Lower leg skin (tissue), 4 donors: ENCODE measurements at regions of chr6 and their contacts with region 1.

Region 1: DNA sequence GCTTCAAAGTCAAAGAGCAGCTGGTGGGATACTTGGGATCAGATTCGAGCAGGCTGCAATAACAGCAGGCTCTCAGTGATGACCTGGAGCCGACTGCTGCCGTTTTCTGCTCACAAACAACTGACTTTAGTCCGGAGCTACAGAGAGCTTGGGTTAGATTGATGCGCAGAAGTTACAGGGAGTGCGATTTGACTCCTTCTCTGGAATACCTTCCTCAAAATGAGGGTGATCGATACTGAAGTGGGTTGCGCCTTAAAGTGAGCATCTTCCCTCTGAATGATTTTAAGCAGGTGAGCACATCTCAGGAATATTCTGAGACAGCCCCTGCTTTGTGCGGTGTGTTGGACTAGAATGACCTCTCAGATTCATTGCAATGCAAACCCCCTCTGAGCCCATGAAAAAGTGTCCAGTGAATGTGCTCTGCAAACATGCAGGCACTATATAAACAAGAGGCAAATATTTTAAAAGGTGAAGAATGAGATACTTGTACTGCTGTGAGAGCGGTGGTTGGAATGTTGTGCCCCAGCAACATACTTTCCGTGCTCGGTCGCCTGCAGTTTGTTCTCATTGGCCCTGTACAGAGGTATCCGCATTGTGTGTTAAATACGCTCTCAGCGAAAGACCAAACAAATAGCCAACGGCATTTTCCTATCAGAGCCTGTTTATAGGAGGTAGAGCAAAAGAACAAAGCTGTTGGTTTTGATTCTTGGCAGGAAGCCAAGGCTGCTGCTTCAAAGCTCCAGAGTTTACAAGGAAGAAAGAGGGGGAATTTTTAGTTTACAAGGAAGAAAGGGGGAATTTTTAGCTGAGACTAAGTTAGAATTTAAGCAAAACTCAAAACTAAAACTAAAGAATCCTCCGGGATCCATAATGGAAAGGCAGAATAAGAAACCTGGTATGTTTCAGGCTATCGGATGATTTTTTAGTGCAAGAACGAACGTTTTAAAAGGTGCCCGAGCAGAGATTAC is 67.7 kb downstream of the PHACTR2 start:
- DNase-seq: no peak
- H3K4me3 ChIP-seq: no peak overlapping the region
- CTCF ChIP-seq: no peak
- POLR2A ChIP-seq: no peak

Region 2: GRCh38 chr6:142413111-142413510 is 1332.3 kb before region 1 on chr6:
- intact Hi-C with region 1: loop called (anchors 5 kb)
- DNase-seq: no peak
- H3K4me3 ChIP-seq: no peak overlapping the region
- CTCF ChIP-seq: no peak
- POLR2A ChIP-seq: no peak

Region 3: GRCh38 chr6:143607974-143608373 is 137.5 kb before region 1 on chr6:
- intact Hi-C with region 1: no loop called
- DNase-seq: no peak
- H3K4me3 ChIP-seq: no peak overlapping the region
- CTCF ChIP-seq: no peak
- POLR2A ChIP-seq: no peak

Region 4: DNA sequence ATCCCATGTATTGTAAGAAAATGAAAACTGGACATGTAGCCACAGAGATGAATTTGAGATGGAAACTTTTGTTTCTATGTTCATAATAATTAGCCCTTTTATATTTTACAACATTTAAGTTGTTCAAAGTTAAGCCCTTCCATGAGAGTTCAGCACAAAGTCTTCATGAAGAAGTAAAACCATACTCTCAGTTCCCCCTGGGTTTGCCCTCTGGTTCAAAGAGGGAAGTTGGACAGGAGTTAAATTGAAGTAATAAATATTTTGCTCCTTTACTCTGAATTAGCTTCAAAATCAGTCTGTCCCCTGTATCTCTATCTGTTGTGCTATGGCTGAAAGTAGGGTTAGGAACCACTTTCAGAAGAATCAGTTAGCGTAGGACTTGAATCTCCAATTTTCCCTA is 36.6 kb before region 1 on chr6:
- intact Hi-C with region 1: no loop called
- DNase-seq: no peak
- H3K4me3 ChIP-seq: no peak overlapping the region
- CTCF ChIP-seq: no peak
- POLR2A ChIP-seq: no peak

Region 5: GRCh38 chr6:144931172-144932035 is 1186.0 kb after region 1 on chr6:
- intact Hi-C with region 1: loop called (anchors 5 kb)
- DNase-seq: peak in 1 of 2 donors; percentile 21
- H3K4me3 ChIP-seq: no peak overlapping the region
- CTCF ChIP-seq: no peak
- POLR2A ChIP-seq: no peak